ENCODE measurements at regions of chr10 and their contacts with region 1.

Region 1: GRCh38 chr10:71727738-71728737 is 8.5 kb upstream of the C10orf105 start:
- DNase-seq: no peak
- ATAC-seq: peak; percentile 64
- H3K4me3 Mint-ChIP-seq: peak overlapping the region; percentile 64
- H3K27ac Mint-ChIP-seq: peak overlapping the region; percentile 91
- H3K4me1 Mint-ChIP-seq: peaks cover 54% of the 10 kb centered on the region
- H3K27me3 Mint-ChIP-seq: no peaks in the 10 kb centered on the region
- CTCF ChIP-seq: no peak

Region 2: DNA sequence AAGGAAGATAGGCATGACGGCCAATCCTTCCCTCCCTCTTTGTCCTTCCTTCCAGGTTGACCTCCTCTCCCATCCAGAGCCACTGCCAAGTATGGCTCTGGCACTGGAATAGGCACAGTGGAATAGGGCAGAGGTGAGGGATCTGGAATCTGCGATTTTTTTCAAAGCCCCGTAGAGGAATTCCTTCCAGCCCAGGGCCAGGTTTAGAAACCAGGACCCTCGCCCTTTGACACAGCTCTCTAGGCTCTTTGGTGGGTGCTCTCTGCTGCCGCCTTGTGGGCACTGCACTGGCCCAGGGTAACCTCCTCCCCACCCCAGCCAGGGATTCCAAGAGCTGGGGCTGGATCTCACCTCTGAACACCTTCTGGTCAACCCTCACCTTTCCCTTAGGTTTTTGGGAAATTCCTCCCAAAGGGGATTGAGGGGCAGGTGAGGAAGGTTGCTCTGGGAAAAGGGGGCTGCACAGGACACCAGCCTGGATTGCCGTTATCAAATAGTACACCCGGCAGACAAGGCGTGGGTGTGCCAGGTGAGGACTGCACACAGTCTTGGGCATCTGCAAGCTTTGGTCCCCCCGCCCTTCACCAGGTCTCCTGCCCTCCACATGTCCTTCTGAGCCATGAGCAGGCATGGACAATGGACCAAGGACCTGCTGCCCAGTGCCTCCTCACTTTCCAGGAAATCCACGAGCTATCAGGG is 31.3 kb before region 1 on chr10:
- CTCF ChIA-PET with region 1: interaction called, 3 read pairs
- POLR2A ChIA-PET with region 1: interaction called, 10 read pairs
- intact Hi-C with region 1: loop called (anchors 1 kb)
- DNase-seq: peak; percentile 59
- ATAC-seq: no peak
- H3K4me3 Mint-ChIP-seq: no peak overlapping the region
- H3K27ac Mint-ChIP-seq: no peak overlapping the region
- H3K4me1 Mint-ChIP-seq: peaks cover 63% of the 10 kb centered on the region
- H3K27me3 Mint-ChIP-seq: no peaks in the 10 kb centered on the region
- CTCF ChIP-seq: peak; percentile 27

Region 3: DNA sequence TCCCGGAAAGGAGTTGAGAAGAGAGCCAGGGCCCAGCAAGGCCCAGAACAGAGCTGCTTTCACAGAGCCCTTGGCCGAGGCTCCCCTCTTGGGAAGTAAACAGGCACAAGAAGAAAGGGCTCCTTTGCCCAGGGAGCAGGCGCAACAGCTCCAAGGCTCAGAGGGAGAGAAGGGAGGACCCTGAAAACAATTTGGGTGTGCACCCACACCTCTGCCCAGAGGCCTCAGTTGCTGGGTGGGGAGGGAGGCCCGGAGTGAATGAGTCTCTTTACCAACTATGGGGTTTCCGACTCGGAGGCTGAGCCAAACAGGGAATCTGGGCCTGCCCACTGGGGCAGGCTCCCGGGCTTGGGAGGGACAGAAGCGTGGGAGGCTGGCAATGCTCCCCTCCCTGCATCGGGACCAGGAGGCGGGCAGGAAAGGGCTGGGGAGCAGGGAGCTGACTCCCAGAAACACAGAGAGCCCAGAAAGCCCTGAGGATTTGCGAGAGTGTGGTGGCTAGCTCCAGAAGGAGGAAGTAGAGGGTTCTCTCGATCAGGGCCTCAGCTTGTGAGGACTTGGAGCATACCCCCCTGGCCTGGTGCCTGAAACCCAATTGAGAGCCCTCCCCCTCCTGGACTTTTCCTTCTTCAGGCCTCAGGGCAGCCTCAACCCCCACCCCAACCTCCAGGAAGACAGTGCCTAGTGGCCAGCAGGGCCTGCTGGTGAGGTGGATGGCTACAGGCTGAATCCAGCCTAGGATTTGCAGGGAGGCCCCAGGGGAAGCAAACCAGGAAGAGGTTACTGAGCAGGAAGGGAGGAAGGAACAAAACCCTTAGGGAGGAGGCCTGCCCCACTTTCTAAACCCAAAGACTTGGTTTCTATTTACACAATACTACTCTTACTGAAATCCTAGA is 14.7 kb before region 1 on chr10:
- CTCF ChIA-PET with region 1: interaction called, 4 read pairs
- POLR2A ChIA-PET with region 1: interaction called, 3 read pairs
- intact Hi-C with region 1: loop called (anchors 2 kb)
- DNase-seq: no peak
- ATAC-seq: peak; percentile 45
- H3K4me3 Mint-ChIP-seq: no peak overlapping the region
- H3K27ac Mint-ChIP-seq: no peak overlapping the region
- H3K4me1 Mint-ChIP-seq: peaks cover 41% of the 10 kb centered on the region
- H3K27me3 Mint-ChIP-seq: no peaks in the 10 kb centered on the region
- CTCF ChIP-seq: no peak

Region 4: DNA sequence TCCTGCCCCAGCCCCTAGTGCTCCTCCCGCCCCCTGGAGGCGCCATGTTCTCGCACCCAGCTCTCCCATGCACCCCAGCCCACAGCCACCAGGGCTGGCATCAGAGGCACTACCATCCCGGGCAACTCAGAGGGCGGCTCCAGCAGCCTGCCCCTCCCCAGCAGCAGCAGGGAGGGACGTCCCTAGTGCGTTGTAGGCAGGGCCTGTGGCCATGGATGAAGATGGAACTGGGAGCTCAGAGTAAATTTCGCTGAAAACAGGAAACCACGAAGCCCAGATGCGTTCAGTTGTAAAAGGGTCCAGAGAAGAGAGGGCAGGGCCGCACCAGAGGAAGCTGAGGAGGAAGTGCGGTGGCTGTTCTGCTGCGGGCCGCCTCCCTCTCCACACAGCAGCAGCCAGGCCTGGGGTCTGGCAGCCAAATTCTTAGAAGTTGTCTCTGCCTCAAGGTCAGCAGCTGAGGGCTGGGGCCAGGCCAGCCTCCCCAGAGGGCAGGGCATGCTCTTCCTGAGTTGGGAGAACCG is 20.7 kb after region 1 on chr10:
- CTCF ChIA-PET with region 1: interaction called, 5 read pairs
- POLR2A ChIA-PET with region 1: interaction called, 9 read pairs
- intact Hi-C with region 1: loop called (anchors 1 kb)
- DNase-seq: peak; percentile 53
- ATAC-seq: peak; percentile 77
- H3K4me3 Mint-ChIP-seq: peak overlapping the region; percentile 69
- H3K27ac Mint-ChIP-seq: peak overlapping the region; percentile 95
- H3K4me1 Mint-ChIP-seq: peaks cover 81% of the 10 kb centered on the region
- H3K27me3 Mint-ChIP-seq: no peaks in the 10 kb centered on the region
- CTCF ChIP-seq: no peak

Region 5: DNA sequence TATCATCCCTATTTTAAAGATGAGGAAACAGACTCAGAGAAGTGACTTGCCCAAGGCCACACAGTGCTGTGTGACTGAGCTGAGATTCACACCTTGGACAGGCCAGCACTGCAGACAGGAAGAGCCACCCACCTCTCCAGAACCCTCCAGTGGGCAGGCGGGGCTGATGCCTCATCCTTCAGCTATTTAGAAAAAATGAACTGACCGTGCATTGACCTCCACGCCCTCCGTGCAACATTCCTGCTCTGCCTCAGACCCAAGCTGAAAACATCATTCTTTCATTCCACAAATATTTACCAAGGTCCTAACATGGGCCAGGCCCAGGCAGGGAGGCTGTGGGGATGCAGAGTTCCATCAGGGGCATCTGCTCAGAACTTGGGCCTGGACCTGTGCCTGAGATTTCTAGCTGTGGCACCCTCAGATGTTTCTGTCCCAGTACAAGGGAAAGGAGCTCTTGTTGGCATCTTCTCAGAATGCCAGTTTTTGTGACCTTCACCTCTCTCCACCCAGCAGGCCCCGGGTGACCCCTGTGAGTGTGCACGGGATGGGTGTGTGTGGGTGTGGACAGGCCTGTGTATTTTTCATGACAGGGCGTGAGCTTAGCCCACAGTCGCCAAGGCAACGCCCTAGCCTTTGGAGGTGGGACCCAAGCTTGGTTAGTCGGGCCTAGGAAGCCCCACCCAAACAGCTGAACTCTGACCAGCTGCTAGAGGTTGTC is 38.8 kb after region 1 on chr10:
- CTCF ChIA-PET with region 1: interaction called, 4 read pairs
- POLR2A ChIA-PET with region 1: interaction called, 79 read pairs
- intact Hi-C with region 1: loop called (anchors 1 kb)
- DNase-seq: no peak
- ATAC-seq: peak; percentile 16
- H3K4me3 Mint-ChIP-seq: peak overlapping the region; percentile 55
- H3K27ac Mint-ChIP-seq: peak overlapping the region; percentile 91
- H3K4me1 Mint-ChIP-seq: peaks cover 79% of the 10 kb centered on the region
- H3K27me3 Mint-ChIP-seq: no peaks in the 10 kb centered on the region
- CTCF ChIP-seq: no peak

Region 6: GRCh38 chr10:71801361-71801760 is 73.3 kb after region 1 on chr10:
- CTCF ChIA-PET with region 1: no interaction called
- POLR2A ChIA-PET with region 1: interaction called, 10 read pairs
- intact Hi-C with region 1: no loop called
- DNase-seq: no peak
- ATAC-seq: peak; percentile 98
- H3K4me3 Mint-ChIP-seq: peak overlapping the region; percentile 1
- H3K27ac Mint-ChIP-seq: peak overlapping the region; percentile 36
- H3K4me1 Mint-ChIP-seq: peaks cover 23% of the 10 kb centered on the region
- H3K27me3 Mint-ChIP-seq: no peaks in the 10 kb centered on the region
- CTCF ChIP-seq: no peak

Region 7: GRCh38 chr10:71893920-71894319 is 165.9 kb after region 1 on chr10:
- CTCF ChIA-PET with region 1: interaction called, 6 read pairs
- POLR2A ChIA-PET with region 1: no interaction called
- intact Hi-C with region 1: loop called (anchors 2 kb)
- DNase-seq: no peak
- ATAC-seq: no peak
- H3K4me3 Mint-ChIP-seq: no peak overlapping the region
- H3K27ac Mint-ChIP-seq: no peak overlapping the region
- H3K4me1 Mint-ChIP-seq: peaks cover 20% of the 10 kb centered on the region
- H3K27me3 Mint-ChIP-seq: peaks cover 2% of the 10 kb centered on the region
- CTCF ChIP-seq: no peak

Measured in activated B cell treated with CpG ODN at 0.5 μM for 24 hours (primary cell).